Endothelial cell of umbilical vein (primary cell): ENCODE measurements at regions of chr5 and their contacts with region 1.

Region 1: DNA sequence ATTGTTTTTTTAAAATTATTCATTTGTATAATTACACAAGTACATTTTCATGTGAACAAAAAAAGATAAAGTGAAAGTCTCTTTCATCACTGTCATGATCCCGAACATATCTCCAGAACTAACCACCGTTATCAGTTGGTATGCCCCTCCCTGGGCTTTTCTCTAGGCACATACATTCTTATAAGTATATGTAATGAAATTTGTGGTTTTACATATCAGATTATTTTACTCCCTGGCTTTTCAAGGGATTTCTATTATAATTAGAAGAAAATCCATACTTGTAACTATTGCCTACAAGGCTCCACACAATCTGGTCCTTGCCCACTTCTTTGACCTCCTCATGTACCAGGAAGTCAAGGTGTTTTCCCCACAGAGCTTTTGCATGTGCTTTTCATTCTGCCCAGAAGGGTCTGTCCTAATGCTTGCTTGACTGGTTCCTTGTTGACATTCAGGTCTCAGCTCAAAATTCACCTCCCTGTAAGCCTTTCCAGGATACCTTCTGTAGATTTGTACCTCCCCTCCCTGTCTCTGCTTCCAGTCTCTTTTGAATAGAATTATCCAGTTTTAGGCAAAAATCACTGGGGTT is 33.7 kb upstream of the HSD17B4 start:
- DNase-seq: no peak
- H3K4me3 ChIP-seq: no peak overlapping the region
- H3K27ac ChIP-seq: no peak overlapping the region
- H3K4me1 ChIP-seq: no peaks in the 10 kb centered on the region
- H3K27me3 ChIP-seq: peaks cover 12 to 14% of the 10 kb centered on the region in 2 experiments
- CTCF ChIP-seq: no peak
- POLR2A ChIP-seq: no peak

Region 2: GRCh38 chr5:118844351-118844750 is 574.3 kb before region 1 on chr5:
- CTCF ChIA-PET with region 1: no interaction called
- POLR2A ChIA-PET with region 1: no interaction called
- dilution Hi-C with region 1: no loop called
- intact Hi-C with region 1: no loop called
- DNase-seq: no peak
- H3K4me3 ChIP-seq: no peak overlapping the region
- H3K27ac ChIP-seq: no peak overlapping the region
- H3K4me1 ChIP-seq: no peaks in the 10 kb centered on the region
- H3K27me3 ChIP-seq: no peaks in the 10 kb centered on the region
- CTCF ChIP-seq: no peak
- POLR2A ChIP-seq: no peak

Region 3: DNA sequence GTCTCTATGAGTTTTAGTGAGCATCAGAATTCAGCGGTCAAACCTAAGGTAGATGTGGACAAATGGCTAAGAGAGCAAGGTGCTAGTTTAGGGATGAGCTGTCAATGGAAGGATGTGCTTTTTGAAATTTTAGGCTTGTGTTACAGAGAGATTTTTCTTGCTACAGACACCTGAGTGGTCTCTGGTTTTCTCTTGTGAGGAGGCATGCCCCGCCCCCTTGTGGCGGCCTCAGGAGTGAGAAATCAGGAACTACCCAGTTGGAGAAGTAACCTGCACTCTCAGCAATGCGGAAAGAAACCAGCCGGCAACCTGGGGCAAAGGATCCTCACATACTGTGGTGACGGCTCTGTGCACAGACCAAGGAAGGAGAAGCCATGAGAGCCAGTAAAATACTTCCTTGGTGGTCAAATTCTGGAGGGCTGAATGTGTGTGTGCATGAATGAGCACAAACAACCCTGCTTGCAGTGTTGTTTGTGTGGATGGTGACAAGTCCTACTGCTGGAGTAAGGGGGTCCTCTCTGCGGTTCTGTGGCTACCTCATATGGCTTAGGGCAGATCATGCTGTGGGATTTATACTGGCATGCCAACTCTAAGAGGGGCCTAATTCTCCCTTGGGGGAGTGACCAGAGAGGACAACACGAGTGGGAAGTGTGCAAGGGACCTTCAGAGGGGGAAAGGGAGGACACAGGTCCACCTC is 17.0 kb after region 1 on chr5:
- CTCF ChIA-PET with region 1: interaction called, 27 read pairs
- POLR2A ChIA-PET with region 1: no interaction called
- dilution Hi-C with region 1: no loop called
- intact Hi-C with region 1: no loop called
- DNase-seq: peak; percentile 62
- H3K4me3 ChIP-seq: no peak overlapping the region
- H3K27ac ChIP-seq: no peak overlapping the region
- H3K4me1 ChIP-seq: no peaks in the 10 kb centered on the region
- H3K27me3 ChIP-seq: peaks cover 4% of the 10 kb centered on the region in 2 experiments
- CTCF ChIP-seq: peak; percentile 59 to 80
- POLR2A ChIP-seq: no peak